ENCODE measurements at regions of chr1 and their contacts with region 1.

Region 1: GRCh38 chr1:31564134-31564989 is 12.0 kb upstream of the TINAGL1 start:
- DNase-seq: peak; percentile 66
- ATAC-seq: peak; percentile 90
- H3K4me3 Mint-ChIP-seq: no peak overlapping the region
- H3K27ac Mint-ChIP-seq: no peak overlapping the region
- H3K4me1 Mint-ChIP-seq: no peaks in the 10 kb centered on the region
- H3K27me3 Mint-ChIP-seq: peaks cover 6% of the 10 kb centered on the region
- CTCF ChIP-seq: peak; percentile 79

Region 2: DNA sequence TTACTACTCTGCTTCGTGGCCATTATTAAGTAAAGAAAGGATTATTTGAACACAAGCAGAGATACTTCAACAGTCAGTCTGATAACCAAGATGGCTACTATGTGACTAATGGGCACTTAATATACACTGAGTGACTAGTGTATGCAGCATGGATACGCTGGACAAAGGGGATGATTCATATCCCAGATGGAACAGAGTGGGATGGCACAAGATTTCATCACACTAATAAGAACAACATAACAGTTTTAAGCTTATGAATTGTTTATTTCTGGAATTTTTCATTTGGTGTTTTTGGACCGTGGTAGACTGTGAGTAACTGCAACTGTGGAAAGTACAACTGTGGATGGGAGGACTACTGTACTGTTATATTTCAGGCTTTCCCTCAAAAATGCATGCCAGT is 258.1 kb before region 1 on chr1:
- CTCF ChIA-PET with region 1: no interaction called
- POLR2A ChIA-PET with region 1: no interaction called
- intact Hi-C with region 1: no loop called
- DNase-seq: no peak
- ATAC-seq: no peak
- H3K4me3 Mint-ChIP-seq: no peak overlapping the region
- H3K27ac Mint-ChIP-seq: no peak overlapping the region
- H3K4me1 Mint-ChIP-seq: peaks cover 15% of the 10 kb centered on the region
- H3K27me3 Mint-ChIP-seq: no peaks in the 10 kb centered on the region
- CTCF ChIP-seq: no peak

Region 3: DNA sequence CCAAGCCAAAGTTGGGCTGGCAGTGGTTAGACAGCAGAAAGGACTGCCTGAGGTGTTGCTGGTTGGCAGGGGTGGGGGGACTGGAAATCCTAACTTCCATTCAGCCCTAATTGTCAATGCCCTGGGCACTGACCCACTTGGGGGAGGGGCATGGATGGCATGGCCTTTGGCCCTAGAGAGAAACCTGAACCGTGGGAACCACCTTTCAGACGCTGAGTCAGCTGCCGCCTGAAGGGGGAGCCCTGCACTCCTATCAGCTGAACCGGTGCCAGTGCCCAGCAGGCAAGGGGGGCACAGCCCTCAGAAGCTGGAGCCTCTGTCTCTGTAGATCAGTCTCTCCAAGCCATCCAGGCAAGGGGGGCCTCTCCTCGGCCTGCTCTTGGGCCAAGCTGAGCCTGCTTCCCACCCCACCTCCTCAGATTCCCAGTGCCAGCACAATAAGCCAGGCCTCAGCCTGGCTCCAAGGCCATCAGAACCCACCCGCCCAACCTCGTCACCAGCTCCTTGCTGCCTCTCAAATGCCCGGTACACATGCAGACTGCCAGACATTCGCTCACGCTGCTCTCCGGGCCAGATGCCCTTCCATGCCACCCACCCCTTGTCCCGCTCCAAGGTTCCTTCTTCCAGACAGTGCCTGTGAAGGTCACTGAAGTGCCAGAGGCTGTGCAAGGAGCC is 23.5 kb after region 1 on chr1:
- CTCF ChIA-PET with region 1: interaction called, 19 read pairs
- POLR2A ChIA-PET with region 1: no interaction called
- intact Hi-C with region 1: no loop called
- DNase-seq: peak; percentile 72
- ATAC-seq: peak; percentile 93
- H3K4me3 Mint-ChIP-seq: no peak overlapping the region
- H3K27ac Mint-ChIP-seq: no peak overlapping the region
- H3K4me1 Mint-ChIP-seq: no peaks in the 10 kb centered on the region
- H3K27me3 Mint-ChIP-seq: peaks cover 11% of the 10 kb centered on the region
- CTCF ChIP-seq: peak; percentile 68

Region 4: GRCh38 chr1:31593770-31594632 is 29.6 kb after region 1 on chr1:
- CTCF ChIA-PET with region 1: interaction called, 19 read pairs
- POLR2A ChIA-PET with region 1: no interaction called
- intact Hi-C with region 1: no loop called
- DNase-seq: peak; percentile 87
- ATAC-seq: peak; percentile 95
- H3K4me3 Mint-ChIP-seq: no peak overlapping the region
- H3K27ac Mint-ChIP-seq: no peak overlapping the region
- H3K4me1 Mint-ChIP-seq: no peaks in the 10 kb centered on the region
- H3K27me3 Mint-ChIP-seq: peaks cover 11% of the 10 kb centered on the region
- CTCF ChIP-seq: peak; percentile 77

Region 5: GRCh38 chr1:31617917-31618660 is 53.7 kb after region 1 on chr1:
- CTCF ChIA-PET with region 1: interaction called, 12 read pairs
- POLR2A ChIA-PET with region 1: no interaction called
- intact Hi-C with region 1: loop called (anchors 5 kb)
- DNase-seq: peak; percentile 63
- ATAC-seq: peak; percentile 86
- H3K4me3 Mint-ChIP-seq: no peak overlapping the region
- H3K27ac Mint-ChIP-seq: no peak overlapping the region
- H3K4me1 Mint-ChIP-seq: peaks cover 2% of the 10 kb centered on the region
- H3K27me3 Mint-ChIP-seq: peaks cover 23% of the 10 kb centered on the region
- CTCF ChIP-seq: peak; percentile 95